ENCODE measurements at regions of chr1 and their contacts with region 1.

Region 1: GRCh38 chr1:111769517-111770146 is 13.9 kb downstream of the DDX20 start:
- DNase-seq: no peak
- H3K4me3 ChIP-seq: no peak overlapping the region
- CTCF ChIP-seq: peak; percentile 58

Region 2: DNA sequence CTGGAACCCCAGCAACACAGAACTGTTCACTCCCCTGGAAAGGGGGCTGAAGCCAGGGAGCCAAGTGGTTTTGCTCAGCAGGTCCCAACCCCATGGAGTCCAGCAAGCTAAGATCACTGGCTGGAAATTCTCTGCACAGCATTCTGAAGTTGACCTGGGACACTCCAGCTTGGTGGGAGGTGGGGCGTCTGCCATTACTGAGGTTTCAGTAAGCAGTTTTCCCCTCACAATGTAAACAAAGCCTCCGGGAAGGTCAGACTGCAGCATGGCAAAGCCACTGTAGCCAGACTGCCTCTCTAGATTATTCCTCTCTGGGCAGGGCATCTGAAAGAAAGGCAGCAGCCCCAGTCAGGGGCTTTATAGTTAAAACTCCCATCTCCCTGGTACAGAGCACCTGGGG is 90.1 kb before region 1 on chr1:
- CTCF ChIA-PET with region 1: no interaction called
- POLR2A ChIA-PET with region 1: no interaction called
- DNase-seq: no peak
- H3K4me3 ChIP-seq: no peak overlapping the region
- CTCF ChIP-seq: no peak

Region 3: DNA sequence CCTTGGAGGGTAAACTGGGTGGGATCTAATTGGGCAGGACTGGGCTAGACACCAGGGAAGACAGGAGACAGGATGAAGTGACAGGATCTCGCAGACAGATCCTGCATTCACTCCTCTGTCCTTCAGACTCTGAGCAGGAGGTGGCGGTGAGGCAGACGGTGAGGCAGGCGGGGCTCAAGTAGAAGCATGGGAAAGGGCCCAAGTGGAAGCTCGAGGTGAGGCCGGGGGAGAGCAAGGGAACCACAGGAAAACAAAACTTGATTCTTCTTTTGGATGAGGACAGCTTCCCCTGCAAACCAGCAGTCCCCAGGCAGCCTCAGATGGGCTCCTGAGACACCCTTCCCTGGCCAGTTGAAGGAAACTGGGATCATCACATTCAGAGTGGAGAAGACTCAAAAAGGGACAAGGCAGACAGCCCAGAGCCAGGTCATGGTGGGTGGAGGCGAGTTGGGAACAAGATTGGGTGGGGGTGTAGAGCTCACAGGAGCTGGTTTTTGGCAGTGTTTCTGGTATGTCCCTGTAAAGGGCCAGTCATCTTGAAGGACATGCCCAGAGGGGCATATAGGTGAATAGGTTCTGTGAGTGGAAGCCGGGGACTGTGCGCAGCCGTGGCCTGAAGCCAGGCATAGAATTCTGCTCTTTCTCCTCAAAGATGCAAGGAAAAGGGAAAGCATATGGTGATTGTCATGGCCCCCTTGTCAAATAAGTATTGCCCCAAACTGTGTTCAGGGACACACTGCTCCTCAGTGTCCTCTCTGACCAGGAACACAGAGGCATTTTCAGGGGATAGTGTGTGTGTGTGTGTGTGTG is 48.5 kb before region 1 on chr1:
- CTCF ChIA-PET with region 1: interaction called, 314 read pairs
- POLR2A ChIA-PET with region 1: no interaction called
- DNase-seq: no peak
- H3K4me3 ChIP-seq: no peak overlapping the region
- CTCF ChIP-seq: no peak

Region 4: GRCh38 chr1:111739194-111739924 is 30.3 kb before region 1 on chr1 and contains the start of gene INKA2:
- CTCF ChIA-PET with region 1: interaction called, 12 read pairs
- POLR2A ChIA-PET with region 1: no interaction called
- DNase-seq: no peak
- H3K4me3 ChIP-seq: peak within 1 kb of the TSS; percentile 54
- CTCF ChIP-seq: no peak

Region 5: GRCh38 chr1:111747282-111747734 is 22.3 kb before region 1 on chr1:
- CTCF ChIA-PET with region 1: interaction called, 12 read pairs
- POLR2A ChIA-PET with region 1: no interaction called
- DNase-seq: no peak
- H3K4me3 ChIP-seq: no peak overlapping the region
- CTCF ChIP-seq: peak; percentile 78

Region 6: DNA sequence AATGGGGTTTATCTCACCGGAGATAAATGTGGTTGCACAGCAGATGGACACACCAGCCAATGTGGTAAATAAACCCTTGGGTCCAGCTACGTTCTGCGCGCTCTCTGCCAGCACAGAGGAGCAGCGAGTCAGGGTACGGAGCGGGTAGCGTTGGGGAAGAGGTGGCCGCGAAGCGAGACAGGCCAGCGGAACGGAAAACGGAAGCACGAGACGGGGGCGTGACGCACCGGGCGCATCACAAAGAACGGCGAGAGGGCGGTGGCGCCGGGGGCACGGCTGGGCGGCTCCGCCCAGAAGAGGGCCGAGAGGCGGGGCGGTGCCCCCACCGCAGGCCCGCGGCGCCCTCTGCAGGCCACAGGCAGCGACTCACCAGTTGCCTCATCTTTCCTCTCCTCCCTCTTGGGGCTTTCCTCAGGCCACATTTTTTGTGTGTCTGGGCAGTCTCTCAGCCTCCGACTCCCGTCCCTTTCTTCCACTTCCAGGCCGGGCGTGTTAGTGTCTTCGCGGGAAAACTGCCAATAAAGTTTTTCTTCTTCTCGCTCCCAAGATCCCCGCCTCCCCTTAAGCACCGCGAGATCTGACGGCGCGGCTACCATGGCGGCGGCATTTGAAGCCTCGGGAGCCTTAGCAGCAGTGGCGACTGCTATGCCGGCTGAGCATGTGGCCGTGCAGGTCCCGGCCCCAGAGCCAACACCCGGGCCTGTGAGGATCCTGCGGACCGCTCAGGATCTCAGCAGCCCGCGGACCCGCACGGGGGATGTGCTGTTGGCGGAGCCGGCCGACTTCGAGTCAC is 14.1 kb before region 1 on chr1 and contains the start of gene DDX20:
- CTCF ChIA-PET with region 1: interaction called, 63 read pairs
- POLR2A ChIA-PET with region 1: no interaction called
- DNase-seq: peak; percentile 95
- H3K4me3 ChIP-seq: peak within 1 kb of the TSS; percentile 91
- CTCF ChIP-seq: peak; percentile 85

Region 7: GRCh38 chr1:111789666-111790316 is 20.2 kb after region 1 on chr1:
- CTCF ChIA-PET with region 1: interaction called, 10 read pairs
- POLR2A ChIA-PET with region 1: no interaction called
- DNase-seq: no peak
- H3K4me3 ChIP-seq: no peak overlapping the region
- CTCF ChIP-seq: no peak

Measured in AG04449 (cell line).